Caco-2 (cell line): ENCODE measurements at regions of chr5 and their contacts with region 1.

Region 1: GRCh38 chr5:168579488-168580226 is 489 bp upstream of the PANK3 start:
- DNase-seq: peak; percentile 98 to 99
- H3K4me3 ChIP-seq: peak overlapping the region; percentile 99
- H3K4me3 Mint-ChIP-seq: peak overlapping the region; percentile 92
- H3K27ac Mint-ChIP-seq: peak overlapping the region; percentile 95
- H3K4me1 ChIP-seq: 0 out of 2 replicates have a peak, but pooled peaks cover 4% of the 10 kb centered on the region
- H3K4me1 Mint-ChIP-seq: peaks cover 20% of the 10 kb centered on the region
- H3K27me3 ChIP-seq: no peaks in the 10 kb centered on the region
- H3K27me3 Mint-ChIP-seq: no peaks in the 10 kb centered on the region
- CTCF ChIP-seq: no peak

Region 2: DNA sequence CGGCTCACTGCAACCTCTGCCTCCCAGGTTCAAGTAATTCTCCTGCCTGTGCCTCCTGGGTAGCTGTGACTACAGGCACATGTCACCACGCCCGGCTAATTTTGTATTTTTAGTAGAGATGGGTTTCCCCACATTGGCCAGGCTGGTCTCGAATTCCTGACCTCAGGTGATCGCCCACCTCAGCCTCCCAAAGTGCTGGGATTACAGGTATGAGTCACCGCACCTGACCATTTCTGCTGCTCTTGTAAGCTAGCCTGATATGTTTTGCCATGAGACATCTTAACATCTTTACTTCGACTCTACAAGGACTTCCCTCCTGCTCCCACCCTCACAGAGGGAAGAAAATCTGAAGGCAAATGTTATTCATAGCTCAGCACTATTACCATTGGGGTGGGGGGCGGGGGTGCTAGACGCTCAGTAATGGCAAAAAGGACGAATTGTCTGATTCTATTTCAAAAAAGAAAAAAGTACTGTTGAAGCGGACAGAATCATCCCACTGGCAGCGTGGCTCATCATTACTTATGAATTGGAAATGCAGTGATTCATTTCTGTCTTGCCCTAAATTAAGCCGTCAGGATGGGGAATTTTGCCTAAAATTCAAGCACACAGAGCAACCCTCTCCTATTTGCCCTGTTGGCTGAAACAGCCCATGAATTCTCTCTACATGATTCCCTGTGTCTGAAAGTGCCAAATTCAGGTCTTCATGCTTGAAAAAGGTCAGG is 334.7 kb before region 1 on chr5:
- CTCF ChIA-PET with region 1: no interaction called
- POLR2A ChIA-PET with region 1: no interaction called
- intact Hi-C with region 1: no loop called
- DNase-seq: no peak
- H3K4me3 ChIP-seq: no peak overlapping the region
- H3K4me3 Mint-ChIP-seq: no peak overlapping the region
- H3K27ac Mint-ChIP-seq: no peak overlapping the region
- H3K4me1 ChIP-seq: no peaks in the 10 kb centered on the region
- H3K4me1 Mint-ChIP-seq: no peaks in the 10 kb centered on the region
- H3K27me3 ChIP-seq: no peaks in the 10 kb centered on the region
- H3K27me3 Mint-ChIP-seq: peaks cover 8% of the 10 kb centered on the region
- CTCF ChIP-seq: no peak

Region 3: GRCh38 chr5:168486136-168486879 is 93.3 kb before region 1 on chr5 and contains the start of gene RARS1:
- CTCF ChIA-PET with region 1: no interaction called
- POLR2A ChIA-PET with region 1: interaction called, 3 read pairs
- intact Hi-C with region 1: loop called (anchors 2 kb)
- DNase-seq: peak; percentile 94 to 95
- H3K4me3 ChIP-seq: peak within 1 kb of the TSS; percentile 93
- H3K4me3 Mint-ChIP-seq: peak within 1 kb of the TSS; percentile 98
- H3K27ac Mint-ChIP-seq: peak within 1 kb of the TSS; percentile 86
- H3K4me1 ChIP-seq: peaks cover 10% of the 10 kb centered on the region
- H3K4me1 Mint-ChIP-seq: peaks cover 8% of the 10 kb centered on the region
- H3K27me3 ChIP-seq: no peaks in the 10 kb centered on the region
- H3K27me3 Mint-ChIP-seq: no peaks in the 10 kb centered on the region
- CTCF ChIP-seq: peak; percentile 93 to 96
- total RNA-seq, gene RARS1: 124 and 129 TPM in 2 replicates

Region 4: DNA sequence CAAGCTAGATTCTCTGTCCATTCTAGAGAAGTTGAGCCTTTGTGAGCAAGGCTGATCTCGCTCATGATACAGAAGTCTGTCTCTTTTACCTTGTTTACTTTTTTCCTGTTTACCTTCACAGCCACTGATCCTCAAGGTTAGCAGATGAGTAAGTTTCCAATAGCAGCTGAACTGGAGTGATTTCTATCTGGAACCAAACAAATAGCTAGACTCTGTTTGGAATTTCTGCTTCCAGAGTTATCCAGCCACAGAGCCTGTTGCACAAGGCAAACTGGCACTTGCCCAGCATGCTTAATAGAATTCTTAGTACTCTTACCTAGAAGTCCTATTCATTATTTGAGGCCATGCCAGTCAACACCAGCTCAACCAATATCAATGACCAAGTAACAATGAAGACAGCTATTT is 12.4 kb after region 1 on chr5:
- CTCF ChIA-PET with region 1: interaction called, 4 read pairs
- POLR2A ChIA-PET with region 1: interaction called, 11 read pairs
- intact Hi-C with region 1: loop called (anchors 1 kb)
- DNase-seq: peak in 1 of 2 experiments; percentile 36
- H3K4me3 ChIP-seq: no peak overlapping the region
- H3K4me3 Mint-ChIP-seq: peak overlapping the region; percentile 23
- H3K27ac Mint-ChIP-seq: peak overlapping the region; percentile 61
- H3K4me1 ChIP-seq: peaks cover 25% of the 10 kb centered on the region
- H3K4me1 Mint-ChIP-seq: peaks cover 30% of the 10 kb centered on the region
- H3K27me3 ChIP-seq: no peaks in the 10 kb centered on the region
- H3K27me3 Mint-ChIP-seq: no peaks in the 10 kb centered on the region
- CTCF ChIP-seq: no peak

Region 5: DNA sequence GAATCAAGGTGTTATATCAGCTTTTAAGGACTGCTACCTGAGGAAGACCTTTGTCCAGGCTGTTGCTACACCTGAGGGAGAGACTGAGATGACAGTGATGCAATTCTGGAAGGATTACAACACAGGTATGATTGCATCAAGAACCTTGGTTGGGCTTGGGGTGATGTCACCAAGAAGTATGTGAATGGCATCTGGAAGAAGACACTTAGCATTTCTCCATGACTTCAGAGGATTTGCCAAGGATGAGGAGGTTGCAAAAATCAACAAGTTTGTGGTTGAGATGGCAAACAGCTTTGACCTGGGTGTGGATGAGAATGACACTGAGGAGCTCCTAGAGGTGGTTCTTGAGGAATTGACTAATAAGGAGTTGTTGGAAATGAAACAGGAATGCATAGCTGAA is 67.4 kb after region 1 on chr5:
- CTCF ChIA-PET with region 1: no interaction called
- POLR2A ChIA-PET with region 1: no interaction called
- intact Hi-C with region 1: loop called (anchors 2 kb)
- DNase-seq: peak; percentile 63 to 75
- H3K4me3 ChIP-seq: no peak overlapping the region
- H3K4me3 Mint-ChIP-seq: no peak overlapping the region
- H3K27ac Mint-ChIP-seq: peak overlapping the region; percentile 74
- H3K4me1 ChIP-seq: peaks cover 12% of the 10 kb centered on the region; the same call in 1 of the 2 replicates
- H3K4me1 Mint-ChIP-seq: peaks cover 9% of the 10 kb centered on the region
- H3K27me3 ChIP-seq: no peaks in the 10 kb centered on the region
- H3K27me3 Mint-ChIP-seq: no peaks in the 10 kb centered on the region
- CTCF ChIP-seq: no peak